OCI-LY7 (cell line): ENCODE measurements at regions of chr2 and their contacts with region 1.

Region 1: DNA sequence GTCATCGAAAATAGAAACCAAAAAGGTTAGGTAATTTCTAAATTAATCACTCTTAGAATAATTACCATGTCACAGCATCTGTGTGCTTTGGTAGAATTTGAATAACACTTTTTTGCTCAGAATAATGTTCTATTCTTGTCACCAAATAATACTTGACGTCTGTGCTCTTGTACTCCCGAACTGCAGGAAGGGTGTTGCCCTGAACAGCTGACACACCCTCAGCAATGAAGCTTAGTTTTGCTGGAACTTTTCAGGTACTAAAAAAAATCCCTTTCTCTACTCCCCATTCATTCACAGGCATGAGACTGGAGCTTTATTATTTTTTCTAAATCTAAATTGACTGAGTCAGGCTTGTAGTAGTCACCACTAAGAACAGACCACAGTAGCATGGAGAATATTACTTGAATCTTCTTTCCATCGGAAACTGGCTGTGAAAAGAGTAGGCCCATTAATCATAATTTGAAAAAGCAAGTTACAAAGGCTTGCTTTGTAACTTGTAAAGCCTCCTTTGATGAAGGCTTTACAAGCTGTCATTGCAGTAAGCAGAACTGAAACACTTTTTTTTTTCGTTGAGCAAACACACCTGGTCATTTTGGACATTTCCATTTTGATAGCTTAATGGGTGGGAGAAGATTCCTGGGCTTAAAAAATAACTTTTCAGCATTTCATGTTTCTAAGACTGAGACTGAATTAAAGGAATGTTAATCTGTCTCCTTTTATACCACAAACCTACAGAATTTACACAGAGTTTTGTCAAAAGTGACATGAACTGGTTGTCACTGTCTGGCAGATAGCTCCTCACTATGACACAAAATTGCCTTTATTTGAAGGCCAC is 70.3 kb upstream of the PELI1 start:
- DNase-seq: peak; percentile 94
- H3K4me3 ChIP-seq: peak overlapping the region; percentile 59
- H3K27ac ChIP-seq: peak overlapping the region; percentile 96
- H3K4me1 ChIP-seq: peaks cover 64% of the 10 kb centered on the region
- CTCF ChIP-seq: no peak

Region 2: DNA sequence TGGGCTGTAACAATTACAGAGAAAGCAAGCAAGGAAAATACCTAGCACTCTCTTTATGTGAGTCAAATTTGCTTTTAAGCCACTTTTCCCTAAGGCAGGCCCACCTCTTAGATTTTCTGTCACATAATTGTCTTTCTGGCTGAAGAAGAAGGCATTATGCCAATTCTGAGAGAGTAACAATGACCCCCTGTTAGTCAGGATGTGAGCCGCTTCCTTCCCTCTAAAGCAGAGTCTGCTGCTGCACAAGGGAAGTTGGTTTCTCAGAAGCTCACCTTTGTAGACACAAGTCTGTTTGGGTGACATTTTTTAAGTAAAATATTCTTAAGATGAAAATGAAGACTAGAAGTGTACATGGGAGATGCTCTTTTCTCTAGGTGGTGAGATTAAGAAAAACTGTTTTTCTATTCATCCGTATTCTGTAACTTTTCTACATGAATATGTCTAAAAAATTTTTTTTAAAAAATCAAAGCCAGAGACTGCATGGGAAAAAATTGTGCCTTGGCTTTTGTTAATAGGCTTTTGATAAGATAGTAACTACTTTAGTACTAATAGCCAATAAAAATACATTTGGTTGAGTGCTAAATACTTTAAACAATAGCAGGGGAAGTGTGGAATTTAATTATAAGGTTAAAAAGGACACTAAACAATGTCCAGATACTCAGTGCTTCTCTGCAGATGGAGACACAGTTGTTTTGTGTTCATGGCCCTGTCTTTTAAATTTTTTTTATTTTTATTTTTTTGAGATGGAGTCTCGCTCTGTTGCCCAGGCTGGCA is 161.8 kb before region 1 on chr2:
- CTCF ChIA-PET with region 1: no interaction called
- POLR2A ChIA-PET with region 1: no interaction called
- intact Hi-C with region 1: loop called (anchors 2 kb)
- DNase-seq: peak; percentile 83
- H3K4me3 ChIP-seq: peak overlapping the region; percentile 11
- H3K27ac ChIP-seq: peak overlapping the region; percentile 96
- H3K4me1 ChIP-seq: peaks cover 84% of the 10 kb centered on the region
- CTCF ChIP-seq: no peak

Region 3: DNA sequence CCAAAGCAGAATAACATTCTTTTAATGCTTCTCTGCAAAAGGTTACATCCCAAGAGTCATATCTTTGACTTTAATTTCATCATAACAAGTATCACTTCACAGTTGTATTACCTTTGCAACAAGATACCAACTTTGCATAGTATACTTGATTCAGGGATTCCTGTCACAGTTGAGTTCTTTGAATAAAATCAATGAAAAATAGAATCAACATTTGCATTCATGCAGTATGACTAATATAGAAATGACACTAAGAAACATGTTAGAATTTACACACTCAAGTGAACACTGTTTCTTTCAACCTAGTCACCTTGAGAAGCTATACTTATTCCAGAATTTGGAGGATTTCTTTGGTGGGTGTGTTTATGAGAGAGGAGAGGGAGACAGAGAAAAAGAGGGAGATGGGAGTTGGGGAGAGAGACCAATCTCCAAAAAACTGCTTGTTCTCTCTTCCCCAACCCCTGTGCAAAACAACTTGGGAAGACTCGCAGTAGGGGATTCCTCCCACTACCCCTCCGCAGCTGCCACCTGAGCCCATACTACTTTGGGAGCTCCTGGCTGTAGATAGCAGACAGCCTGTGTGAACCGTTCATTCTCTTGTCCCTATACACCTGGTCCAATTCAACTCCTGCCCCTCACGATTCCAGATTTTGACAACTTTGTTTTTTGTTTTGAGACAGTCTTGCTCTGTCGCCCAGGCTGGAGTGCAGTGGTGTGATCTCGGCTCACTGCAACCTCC is 128.0 kb before region 1 on chr2:
- CTCF ChIA-PET with region 1: no interaction called
- POLR2A ChIA-PET with region 1: interaction called, 7 read pairs
- intact Hi-C with region 1: loop called (anchors 2 kb)
- DNase-seq: peak; percentile 75
- H3K4me3 ChIP-seq: peak overlapping the region; percentile 55
- H3K27ac ChIP-seq: peak overlapping the region; percentile 99
- H3K4me1 ChIP-seq: peaks cover 95% of the 10 kb centered on the region
- CTCF ChIP-seq: no peak

Region 4: GRCh38 chr2:64228126-64228678 is 13.7 kb after region 1 on chr2:
- CTCF ChIA-PET with region 1: interaction called, 5 read pairs
- POLR2A ChIA-PET with region 1: interaction called, 38 read pairs
- intact Hi-C with region 1: no loop called
- DNase-seq: peak; percentile 94
- H3K4me3 ChIP-seq: peak overlapping the region; percentile 70
- H3K27ac ChIP-seq: peak overlapping the region; percentile 76
- H3K4me1 ChIP-seq: peaks cover 27% of the 10 kb centered on the region
- CTCF ChIP-seq: no peak